BJ (cell line): ENCODE measurements at regions of chr3 and their contacts with region 1.

Region 1: GRCh38 chr3:101179637-101180036 is 140.7 kb downstream of the IMPG2 start:
- DNase-seq: peak; percentile 44
- H3K4me3 ChIP-seq: no peak overlapping the region
- H3K27me3 ChIP-seq: no peaks in the 10 kb centered on the region
- CTCF ChIP-seq: no peak

Region 2: DNA sequence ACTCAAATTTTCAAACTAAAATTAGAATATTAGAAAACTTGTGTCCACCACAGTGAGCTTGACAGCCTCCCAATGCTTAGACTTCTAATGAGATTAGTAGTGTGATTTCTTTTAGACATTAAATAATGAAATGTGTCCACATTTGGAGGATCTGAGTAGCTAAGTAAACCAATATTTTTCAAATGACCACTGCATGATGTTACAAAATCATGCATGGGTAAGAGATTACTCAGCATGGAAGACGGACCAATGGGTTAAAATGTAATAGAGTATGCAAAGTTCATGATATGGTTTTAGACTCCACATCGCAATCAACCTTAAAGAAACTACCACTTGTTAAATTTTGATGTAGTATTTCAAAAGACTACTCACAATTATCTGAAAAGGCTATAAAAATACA is 10.2 kb after region 1 on chr3:
- CTCF ChIA-PET with region 1: interaction called, 10 read pairs
- POLR2A ChIA-PET with region 1: interaction called, 3 read pairs
- DNase-seq: no peak
- H3K4me3 ChIP-seq: no peak overlapping the region
- H3K27me3 ChIP-seq: no peaks in the 10 kb centered on the region
- CTCF ChIP-seq: no peak

Region 3: DNA sequence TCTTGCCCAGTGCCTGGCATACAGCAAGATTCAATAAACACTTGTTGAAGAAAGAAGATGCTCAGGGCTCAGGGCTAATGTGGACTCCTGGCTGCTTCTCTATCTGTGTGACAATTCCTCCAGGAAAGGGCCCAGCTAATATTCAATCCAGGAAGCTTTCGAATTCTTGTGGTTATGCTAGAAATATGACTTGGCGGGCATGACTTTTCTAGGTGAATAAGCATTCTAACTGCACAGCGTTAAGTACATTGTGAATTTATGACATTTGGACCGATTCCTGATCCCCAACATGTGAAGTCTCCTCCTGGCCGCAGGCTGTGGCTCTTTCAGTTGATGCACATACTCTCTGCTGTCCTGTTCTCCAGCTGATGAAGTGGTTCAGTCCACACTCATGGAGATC is 23.8 kb after region 1 on chr3:
- CTCF ChIA-PET with region 1: no interaction called
- POLR2A ChIA-PET with region 1: no interaction called
- DNase-seq: no peak
- H3K4me3 ChIP-seq: no peak overlapping the region
- H3K27me3 ChIP-seq: no peaks in the 10 kb centered on the region
- CTCF ChIP-seq: no peak